ENCODE measurements at regions of chr18 and their contacts with region 1.

Region 1: GRCh38 chr18:54013452-54013851 is 211.0 kb downstream of the MBD2 start:
- DNase-seq: no peak
- H3K4me3 ChIP-seq: no peak overlapping the region
- CTCF ChIP-seq: no peak
- POLR2A ChIP-seq: no peak

Region 2: DNA sequence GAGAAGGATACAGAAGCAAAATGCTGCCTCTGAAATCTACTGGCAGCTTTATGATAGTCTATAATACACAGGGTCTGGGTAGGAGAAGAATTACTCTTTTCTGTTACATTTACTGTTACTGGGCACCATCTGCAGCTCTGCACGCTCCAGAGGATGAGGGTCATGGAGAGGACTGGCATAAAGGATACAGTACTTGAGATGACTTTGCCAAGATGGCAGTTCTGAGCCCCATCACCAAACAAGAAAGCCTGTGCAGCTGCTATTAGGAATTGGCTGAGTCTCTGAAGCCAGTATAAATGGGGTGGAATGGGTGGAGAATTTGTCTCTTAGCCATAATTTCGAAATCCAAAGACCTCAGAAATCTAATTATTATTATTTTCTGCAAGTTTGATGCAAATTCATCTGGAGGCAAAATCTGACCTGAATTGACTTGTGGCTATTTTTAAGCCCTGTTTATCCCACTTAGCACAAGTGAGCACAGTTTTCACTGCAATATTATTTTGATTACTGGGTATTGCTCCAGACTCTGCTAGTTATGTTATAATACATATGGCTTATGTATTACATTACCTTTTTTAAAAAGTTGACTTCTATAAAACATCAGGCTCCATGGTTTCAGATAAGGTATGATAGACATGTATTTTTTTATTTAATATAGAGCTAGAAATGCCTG is 368.5 kb before region 1 on chr18:
- intact Hi-C with region 1: loop called (anchors 2 kb)
- DNase-seq: no peak
- H3K4me3 ChIP-seq: no peak overlapping the region
- CTCF ChIP-seq: no peak
- POLR2A ChIP-seq: no peak